ENCODE measurements at regions of chr1 and their contacts with region 1.

Region 1: GRCh38 chr1:66732407-66733166 is 19.7 kb upstream of the DYNLT5 start:
- DNase-seq: no peak
- H3K4me3 Mint-ChIP-seq: no peak overlapping the region
- H3K27ac Mint-ChIP-seq: no peak overlapping the region
- H3K4me1 Mint-ChIP-seq: peaks cover 23% of the 10 kb centered on the region
- H3K27me3 Mint-ChIP-seq: no peaks in the 10 kb centered on the region

Region 2: GRCh38 chr1:66752671-66753371 is 20.2 kb after region 1 on chr1:
- CTCF ChIA-PET with region 1: interaction called, 12 read pairs
- intact Hi-C with region 1: no loop called
- DNase-seq: no peak
- H3K4me3 Mint-ChIP-seq: peak overlapping the region; percentile 68
- H3K27ac Mint-ChIP-seq: no peak overlapping the region
- H3K4me1 Mint-ChIP-seq: peaks cover 12% of the 10 kb centered on the region
- H3K27me3 Mint-ChIP-seq: peaks cover 28% of the 10 kb centered on the region

Region 3: DNA sequence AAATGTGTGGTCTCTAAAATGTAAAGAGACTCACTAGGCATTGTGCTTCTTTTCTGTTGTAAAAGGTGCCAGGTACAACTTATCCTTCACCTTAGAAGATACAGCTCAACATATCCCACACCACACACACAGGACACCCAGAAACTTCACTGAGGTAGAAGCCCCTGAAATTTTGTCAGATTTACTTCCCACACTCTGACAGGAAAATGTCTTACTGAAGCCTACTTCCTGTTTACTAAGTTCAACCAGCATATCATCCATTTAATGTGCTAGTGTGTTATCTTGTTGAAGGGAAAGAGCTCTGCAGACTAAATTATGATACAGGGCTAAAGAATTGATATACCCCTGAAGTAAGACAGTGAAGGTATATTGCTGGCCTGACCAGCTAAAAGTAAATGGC is 108.3 kb after region 1 on chr1:
- CTCF ChIA-PET with region 1: no interaction called
- intact Hi-C with region 1: no loop called
- DNase-seq: no peak
- H3K4me3 Mint-ChIP-seq: no peak overlapping the region
- H3K27ac Mint-ChIP-seq: peak overlapping the region; percentile 63
- H3K4me1 Mint-ChIP-seq: peaks cover 14% of the 10 kb centered on the region
- H3K27me3 Mint-ChIP-seq: no peaks in the 10 kb centered on the region